ENCODE measurements at regions of chr6 and their contacts with region 1.

Region 1: DNA sequence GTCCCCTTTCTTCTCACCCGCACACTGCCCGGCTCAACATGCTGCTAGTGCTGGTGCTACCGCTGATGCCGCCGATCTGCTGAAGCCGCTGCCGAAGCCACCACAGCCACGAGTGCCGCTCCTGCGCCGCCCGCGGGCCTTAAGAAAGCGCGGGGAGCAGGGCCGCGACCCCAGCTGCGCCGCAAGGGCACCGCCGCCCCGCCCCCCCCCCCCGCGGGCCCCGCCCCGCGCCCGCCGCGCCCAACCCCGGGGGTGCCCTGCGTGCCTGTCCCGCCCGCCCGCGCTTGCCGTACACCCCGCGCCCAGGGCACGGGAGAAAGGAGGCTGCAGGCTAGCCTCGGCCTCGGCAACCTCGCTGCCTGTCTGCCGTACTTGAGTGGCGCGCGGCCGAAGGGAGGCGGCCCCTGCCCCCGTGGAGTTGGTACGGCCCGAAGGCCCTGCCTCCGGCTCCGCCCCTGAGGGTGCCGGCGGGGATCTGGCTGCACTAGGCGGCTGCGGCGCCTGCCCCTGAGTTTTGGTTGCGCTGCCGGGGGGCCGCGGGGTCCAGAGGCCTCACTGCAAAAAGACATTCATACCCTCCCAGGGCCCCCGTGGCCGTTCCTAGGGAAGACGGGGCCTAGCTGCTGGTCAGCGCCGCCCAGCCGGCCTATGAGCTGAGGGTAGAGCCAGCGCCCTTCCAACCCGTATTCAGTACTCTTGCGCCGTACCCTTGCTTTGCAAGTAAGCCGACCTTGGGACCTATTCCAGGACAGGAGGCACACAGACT is at the start of gene SOD2:
- DNase-seq: peak; percentile 75 to 92 (median 85)
- ATAC-seq: peak; percentile 84
- H3K4me3 ChIP-seq: peak within 1 kb of the TSS; percentile 63
- H3K4me3 Mint-ChIP-seq: peak within 1 kb of the TSS; percentile 74 to 97 (median 94)
- H3K27ac ChIP-seq: peak within 1 kb of the TSS; percentile 90
- H3K27ac Mint-ChIP-seq: peak within 1 kb of the TSS; percentile 94 to 98 (median 97)
- H3K4me1 ChIP-seq: peaks cover 18 to 31% of the 10 kb centered on the region in 2 donors
- H3K4me1 Mint-ChIP-seq: peaks cover 31 to 62% (median 44%) of the 10 kb centered on the region in 7 donors
- H3K27me3 ChIP-seq: no peaks in the 10 kb centered on the region
- H3K27me3 Mint-ChIP-seq: no peaks in the 10 kb centered on the region
- total RNA-seq, gene SOD2: 80.2 to 306 (median 105) TPM

Region 2: GRCh38 chr6:159720708-159721107 is 27.4 kb after region 1 on chr6:
- CTCF ChIA-PET with region 1: interaction called, 6 read pairs
- POLR2A ChIA-PET with region 1: interaction called, 115 read pairs
- intact Hi-C with region 1: loop called (anchors 1 kb)
- DNase-seq: peak in 7 of 9 donors; percentile 54 to 73 (median 65)
- ATAC-seq: peak; percentile 85
- H3K4me3 ChIP-seq: no peak overlapping the region
- H3K4me3 Mint-ChIP-seq: no peak overlapping the region
- H3K27ac ChIP-seq: no peak overlapping the region
- H3K27ac Mint-ChIP-seq: peak overlapping the region in 1 of 9 donors; percentile 32
- H3K4me1 ChIP-seq: peaks cover under 1 to 4% of the 10 kb centered on the region in 2 donors
- H3K4me1 Mint-ChIP-seq: peaks cover 12 to 33% (median 25%) of the 10 kb centered on the region in 7 donors
- H3K27me3 ChIP-seq: no peaks in the 10 kb centered on the region
- H3K27me3 Mint-ChIP-seq: no peaks in the 10 kb centered on the region

Region 3: DNA sequence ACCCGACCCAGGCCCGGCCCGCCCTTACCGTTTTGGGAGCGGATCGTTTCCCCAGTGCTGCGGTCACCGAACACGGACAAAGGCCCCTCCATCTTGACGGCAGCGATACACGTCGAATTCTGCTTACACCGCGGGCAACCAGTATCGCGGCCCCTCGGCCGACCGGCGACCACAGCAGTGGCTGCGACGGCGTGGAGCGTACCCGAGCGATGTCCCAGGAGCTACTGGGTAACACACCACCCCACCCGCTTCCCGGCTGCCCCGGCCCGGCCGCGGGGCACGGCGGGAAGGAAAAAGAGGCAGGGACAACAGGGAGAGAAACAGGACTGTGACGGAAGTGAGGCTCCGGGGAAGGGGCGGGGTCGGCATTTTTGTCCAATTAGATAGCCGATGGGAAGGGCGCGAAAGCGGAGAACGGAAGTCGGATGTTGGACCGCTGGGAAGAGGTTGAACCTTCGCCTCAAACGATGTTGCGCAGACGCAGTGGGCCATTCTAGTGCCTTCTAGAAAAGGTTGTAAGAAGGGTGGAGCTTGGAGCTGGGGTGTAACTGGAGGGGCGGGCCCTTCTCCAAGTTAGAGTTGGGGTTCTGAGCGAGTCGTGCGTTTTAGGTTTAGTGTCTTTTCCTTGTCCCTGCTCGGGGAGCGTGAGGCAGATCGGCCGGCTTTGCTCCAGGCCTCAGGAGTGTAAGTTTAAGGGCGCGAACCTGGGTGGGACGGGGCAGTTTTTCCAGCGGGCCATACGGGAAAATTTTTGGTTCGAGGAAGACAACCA is 96.3 kb after region 1 on chr6 and contains the start of gene TCP1:
- CTCF ChIA-PET with region 1: interaction called, 10 read pairs
- POLR2A ChIA-PET with region 1: interaction called, 86 read pairs
- intact Hi-C with region 1: loop called (anchors 1 kb)
- DNase-seq: peak; percentile 87 to 99 (median 98)
- ATAC-seq: peak; percentile 89
- H3K4me3 ChIP-seq: peak within 1 kb of the TSS; percentile 98
- H3K4me3 Mint-ChIP-seq: peak within 1 kb of the TSS; percentile 94 to 100 (median 99)
- H3K27ac ChIP-seq: peak within 1 kb of the TSS; percentile 94
- H3K27ac Mint-ChIP-seq: peak within 1 kb of the TSS; percentile 95 to 99 (median 98)
- H3K4me1 ChIP-seq: peaks cover 15 to 27% of the 10 kb centered on the region in 2 donors
- H3K4me1 Mint-ChIP-seq: peaks cover 41 to 83% (median 69%) of the 10 kb centered on the region in 7 donors
- H3K27me3 ChIP-seq: no peaks in the 10 kb centered on the region
- H3K27me3 Mint-ChIP-seq: peaks cover 0 to 3% (median 0%) of the 10 kb centered on the region in 5 donors
- total RNA-seq, gene TCP1: 147 to 225 (median 154) TPM

Region 4: GRCh38 chr6:159968440-159969203 is 275.3 kb after region 1 on chr6 and contains the start of gene IGF2R:
- CTCF ChIA-PET with region 1: interaction called, 5 read pairs
- POLR2A ChIA-PET with region 1: interaction called, 5 read pairs
- intact Hi-C with region 1: loop called in 1 of 2 experiments (anchors 1 kb)
- DNase-seq: peak; percentile 88 to 94 (median 92)
- ATAC-seq: peak; percentile 95
- H3K4me3 ChIP-seq: peak within 1 kb of the TSS; percentile 69
- H3K4me3 Mint-ChIP-seq: peak within 1 kb of the TSS; percentile 88 to 98 (median 92)
- H3K27ac ChIP-seq: peak within 1 kb of the TSS; percentile 82
- H3K27ac Mint-ChIP-seq: peak within 1 kb of the TSS; percentile 89 to 97 (median 94)
- H3K4me1 ChIP-seq: peaks cover 18 to 28% of the 10 kb centered on the region in 2 donors
- H3K4me1 Mint-ChIP-seq: peaks cover 27 to 43% (median 37%) of the 10 kb centered on the region in 7 donors
- H3K27me3 ChIP-seq: no peaks in the 10 kb centered on the region
- H3K27me3 Mint-ChIP-seq: peaks cover 0 to 30% (median 0%) of the 10 kb centered on the region in 5 donors
- total RNA-seq, gene IGF2R: 59.1 to 79.2 (median 74.2) TPM

Region 5: GRCh38 chr6:160069050-160069454 is 375.7 kb after region 1 on chr6:
- CTCF ChIA-PET with region 1: no interaction called
- POLR2A ChIA-PET with region 1: no interaction called
- intact Hi-C with region 1: loop called in 1 of 2 experiments (anchors 10 kb)
- DNase-seq: peak in 5 of 9 donors; percentile 9 to 36 (median 21)
- ATAC-seq: peak; percentile 63
- H3K4me3 ChIP-seq: peak overlapping the region; percentile 13
- H3K4me3 Mint-ChIP-seq: peak overlapping the region; percentile 18 to 69 (median 56)
- H3K27ac ChIP-seq: no peak overlapping the region
- H3K27ac Mint-ChIP-seq: peak overlapping the region in 3 of 9 donors; percentile 11 to 31 (median 17)
- H3K4me1 ChIP-seq: peaks cover 15 to 20% of the 10 kb centered on the region in 2 donors
- H3K4me1 Mint-ChIP-seq: peaks cover 24 to 63% (median 32%) of the 10 kb centered on the region in 7 donors
- H3K27me3 ChIP-seq: no peaks in the 10 kb centered on the region
- H3K27me3 Mint-ChIP-seq: no peaks in the 10 kb centered on the region

Region 6: DNA sequence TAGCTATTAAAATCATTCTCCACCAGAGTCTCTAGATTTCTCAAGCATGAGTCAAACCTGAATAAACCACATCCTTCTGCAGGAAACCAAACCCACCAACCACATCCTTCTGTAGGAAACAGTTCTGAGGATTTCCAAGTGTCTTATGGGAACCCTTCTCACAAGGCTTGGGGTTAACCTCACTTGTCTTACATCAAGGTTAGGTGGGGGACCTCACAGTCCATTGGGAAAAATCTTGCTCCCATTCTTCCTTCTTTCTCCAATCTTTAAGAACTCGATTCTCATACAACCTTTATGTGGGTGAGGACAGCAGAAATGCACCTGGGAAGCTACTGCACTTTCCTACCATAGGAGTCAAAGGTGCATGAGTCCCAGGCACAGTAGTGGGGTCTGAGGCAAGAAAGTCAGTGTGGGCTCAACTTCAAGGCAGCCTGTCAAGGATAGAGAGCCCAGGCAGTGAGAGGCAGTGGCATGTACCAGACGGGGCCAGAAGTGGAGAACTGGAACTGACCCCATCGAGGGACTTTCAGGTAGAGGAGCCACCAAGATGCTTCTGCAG is 769.3 kb after region 1 on chr6:
- CTCF ChIA-PET with region 1: no interaction called
- POLR2A ChIA-PET with region 1: no interaction called
- intact Hi-C with region 1: loop called (anchors 1 to 2 kb)
- DNase-seq: peak in 8 of 9 donors; percentile 69 to 93 (median 90)
- ATAC-seq: peak; percentile 95
- H3K4me3 ChIP-seq: peak overlapping the region; percentile 47
- H3K4me3 Mint-ChIP-seq: peak overlapping the region; percentile 60 to 89 (median 72)
- H3K27ac ChIP-seq: no peak overlapping the region
- H3K27ac Mint-ChIP-seq: peak overlapping the region; percentile 53 to 98 (median 88)
- H3K4me1 ChIP-seq: peaks cover 50 to 56% of the 10 kb centered on the region in 2 donors
- H3K4me1 Mint-ChIP-seq: peaks cover 33 to 81% (median 71%) of the 10 kb centered on the region in 7 donors
- H3K27me3 ChIP-seq: no peaks in the 10 kb centered on the region
- H3K27me3 Mint-ChIP-seq: peaks cover 0 to 52% (median 10%) of the 10 kb centered on the region in 5 donors

Measured in naive thymus-derived CD4-positive, alpha-beta T cell (primary cell).